Gastrocnemius medialis (tissue), 4 donors: ENCODE measurements at regions of chr11 and their contacts with region 1.

Region 1: DNA sequence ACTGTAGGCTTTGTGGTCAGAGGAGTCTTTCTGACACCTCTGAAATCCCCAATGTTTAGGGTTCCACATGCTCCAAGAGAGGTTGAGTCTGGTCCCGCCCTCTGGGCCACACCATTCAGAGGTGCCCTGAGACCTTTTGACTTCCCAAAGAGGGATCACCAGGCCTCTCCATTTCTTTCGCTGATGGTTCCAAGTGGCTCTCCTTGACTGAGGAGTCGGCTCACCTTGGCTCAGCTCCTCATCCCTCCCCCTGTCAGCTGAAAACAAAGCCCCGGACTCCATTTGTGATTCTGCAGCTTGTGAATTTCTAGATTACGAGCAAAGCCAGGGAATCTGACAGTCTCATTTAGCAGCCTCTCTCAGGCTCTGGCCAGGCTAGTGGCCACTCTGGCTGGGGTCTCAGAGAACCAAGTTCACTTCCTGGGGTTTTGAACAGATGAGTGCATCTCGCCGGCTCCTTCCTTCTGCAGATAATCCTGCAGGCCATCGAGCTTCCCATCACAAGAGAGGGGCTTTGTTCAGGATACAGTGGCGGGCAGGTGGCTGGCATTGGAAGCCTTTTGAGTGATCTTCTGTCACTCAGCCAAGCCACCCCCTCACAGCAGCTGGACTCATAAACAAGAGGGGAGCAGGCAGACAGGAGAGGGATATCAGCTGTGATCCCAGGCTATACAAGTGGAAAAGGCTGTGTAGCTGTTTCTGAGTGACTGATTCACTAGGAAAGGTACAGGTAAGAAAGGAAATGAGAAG is 102.9 kb downstream of the TRIM29 start:
- DNase-seq: no peak
- ATAC-seq: no peak
- H3K4me3 ChIP-seq: no peak overlapping the region
- H3K27ac ChIP-seq: no peak overlapping the region
- H3K4me1 ChIP-seq: no peaks in the 10 kb centered on the region
- H3K27me3 ChIP-seq: peaks cover 0 to 2% (median 0%) of the 10 kb centered on the region in 3 donors
- CTCF ChIP-seq: no peak
- POLR2A ChIP-seq: no peak

Region 2: DNA sequence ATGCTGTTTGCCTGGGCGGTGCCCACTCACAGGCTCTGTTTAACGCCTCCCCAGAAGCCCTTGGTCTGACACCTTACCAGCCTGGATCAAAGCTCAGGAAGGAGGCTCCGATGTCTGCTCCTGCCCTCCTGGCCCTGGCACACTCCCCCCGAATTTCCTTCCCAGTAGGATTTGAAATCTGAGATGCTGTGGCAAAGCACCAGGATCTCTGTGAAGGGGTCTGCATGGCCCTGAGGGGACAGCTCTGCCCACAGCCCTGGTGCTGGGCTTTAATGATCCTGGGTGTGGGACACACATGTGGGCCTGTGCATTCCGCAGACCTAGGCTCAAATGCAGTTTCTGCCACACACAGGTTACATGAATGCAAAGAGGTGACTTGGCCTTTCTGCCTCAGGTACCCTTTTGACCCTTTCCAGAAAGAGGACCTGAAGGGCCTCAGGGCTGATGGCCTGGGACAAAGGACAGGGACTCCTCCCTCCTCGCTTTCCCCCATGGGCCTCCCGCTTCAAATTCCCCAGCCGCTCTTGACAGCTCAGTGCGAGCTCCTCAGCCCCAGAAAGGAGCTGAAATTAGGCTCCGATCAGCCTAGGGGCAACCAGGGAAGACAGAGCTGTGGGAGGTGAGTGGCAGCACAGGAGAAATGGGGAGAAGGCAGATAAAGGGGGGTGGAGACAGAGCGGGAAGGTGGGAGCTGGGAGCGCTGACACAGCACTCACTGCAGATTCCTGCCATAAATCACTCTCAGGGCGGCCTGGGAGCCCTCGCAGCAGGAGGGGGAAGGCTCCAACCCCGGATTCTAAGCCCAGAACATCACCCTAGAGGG is 61.5 kb after region 1 on chr11:
- in situ Hi-C with region 1: loop called in 1 of 4 experiments (anchors 10 kb)
- intact Hi-C with region 1: no loop called
- DNase-seq: no peak
- ATAC-seq: no peak
- H3K4me3 ChIP-seq: no peak overlapping the region
- H3K27ac ChIP-seq: no peak overlapping the region
- H3K4me1 ChIP-seq: no peaks in the 10 kb centered on the region
- H3K27me3 ChIP-seq: no peaks in the 10 kb centered on the region
- CTCF ChIP-seq: no peak
- POLR2A ChIP-seq: no peak